ENCODE measurements at regions of chr22 and their contacts with region 1.

Region 1: GRCh38 chr22:32684822-32685187 is 116.7 kb upstream of the TIMP3 start:
- DNase-seq: no peak
- H3K4me3 ChIP-seq: no peak overlapping the region
- H3K27ac ChIP-seq: no peak overlapping the region
- H3K4me1 ChIP-seq: no peaks in the 10 kb centered on the region
- H3K27me3 ChIP-seq: no peaks in the 10 kb centered on the region
- CTCF ChIP-seq: no peak
- EP300 ChIP-seq: no peak
- POLR2A ChIP-seq: no peak

Region 2: DNA sequence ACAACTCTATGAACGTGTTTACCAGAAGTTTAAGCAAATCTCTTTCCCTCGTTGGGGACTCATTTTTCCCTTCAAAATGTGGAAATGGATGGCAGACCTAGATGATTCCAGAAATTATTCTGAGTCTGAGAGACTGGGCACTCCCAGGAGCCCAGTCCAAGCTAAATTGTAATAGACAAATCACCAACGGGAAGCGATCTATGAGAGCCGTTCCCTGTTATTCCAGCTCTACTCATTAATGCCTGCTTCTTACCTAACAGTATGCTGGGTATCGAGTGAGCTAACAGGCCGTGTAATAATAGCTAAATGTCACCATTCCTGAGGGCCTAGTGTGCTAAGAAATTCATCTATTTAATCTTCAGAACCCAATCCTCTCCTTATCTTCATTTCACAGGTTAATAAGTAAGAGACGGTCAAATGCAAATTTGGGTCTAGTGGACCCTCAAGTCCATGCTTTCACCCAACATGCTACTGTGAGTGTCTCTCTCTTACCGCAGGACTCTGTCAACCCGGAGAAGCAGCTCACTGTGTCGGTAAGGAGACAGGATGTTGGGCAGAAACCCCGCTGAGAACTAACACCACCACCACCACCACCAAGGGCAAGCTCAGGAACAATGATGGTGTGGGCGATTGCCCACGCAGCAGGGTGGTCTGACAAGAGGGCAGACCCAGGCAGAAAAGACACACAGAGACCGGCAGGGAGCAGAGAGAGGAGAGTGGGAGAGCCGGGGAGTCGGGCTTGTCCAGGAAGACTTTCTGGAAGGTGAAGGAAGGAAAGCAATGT is 59.6 kb after region 1 on chr22:
- intact Hi-C with region 1: loop called in 1 of 4 experiments (anchors 5 kb)
- DNase-seq: no peak
- H3K4me3 ChIP-seq: no peak overlapping the region
- H3K27ac ChIP-seq: no peak overlapping the region
- H3K4me1 ChIP-seq: no peaks in the 10 kb centered on the region
- H3K27me3 ChIP-seq: no peaks in the 10 kb centered on the region
- CTCF ChIP-seq: no peak
- EP300 ChIP-seq: no peak
- POLR2A ChIP-seq: no peak

Measured in ovary (tissue), 10 donors.